HAP-1 (cell line): ENCODE measurements at regions of chr14 and their contacts with region 1.

Region 1: GRCh38 chr14:69580009-69580577 is 5.4 kb upstream of the CCDC177 start:
- DNase-seq: peak; percentile 44 to 66
- H3K4me3 ChIP-seq: no peak overlapping the region
- H3K4me1 ChIP-seq: no peaks in the 10 kb centered on the region
- H3K27me3 ChIP-seq: peaks cover 12% of the 10 kb centered on the region

Region 2: GRCh38 chr14:69726761-69727511 is 146.8 kb after region 1 on chr14:
- in situ Hi-C with region 1: loop called (anchors 5 kb)
- DNase-seq: peak; percentile 47 to 89
- H3K4me3 ChIP-seq: no peak overlapping the region
- H3K4me1 ChIP-seq: peaks cover 5% of the 10 kb centered on the region; the same call in 1 of the 2 replicates
- H3K27me3 ChIP-seq: no peaks in the 10 kb centered on the region

Region 3: GRCh38 chr14:70013269-70013873 is 433.3 kb after region 1 on chr14:
- in situ Hi-C with region 1: loop called (anchors 25 kb)
- DNase-seq: peak in 1 of 2 experiments; percentile 68
- H3K4me3 ChIP-seq: no peak overlapping the region
- H3K4me1 ChIP-seq: no peaks in the 10 kb centered on the region
- H3K27me3 ChIP-seq: peaks cover 3% of the 10 kb centered on the region; the same call in 1 of the 2 replicates

Region 4: DNA sequence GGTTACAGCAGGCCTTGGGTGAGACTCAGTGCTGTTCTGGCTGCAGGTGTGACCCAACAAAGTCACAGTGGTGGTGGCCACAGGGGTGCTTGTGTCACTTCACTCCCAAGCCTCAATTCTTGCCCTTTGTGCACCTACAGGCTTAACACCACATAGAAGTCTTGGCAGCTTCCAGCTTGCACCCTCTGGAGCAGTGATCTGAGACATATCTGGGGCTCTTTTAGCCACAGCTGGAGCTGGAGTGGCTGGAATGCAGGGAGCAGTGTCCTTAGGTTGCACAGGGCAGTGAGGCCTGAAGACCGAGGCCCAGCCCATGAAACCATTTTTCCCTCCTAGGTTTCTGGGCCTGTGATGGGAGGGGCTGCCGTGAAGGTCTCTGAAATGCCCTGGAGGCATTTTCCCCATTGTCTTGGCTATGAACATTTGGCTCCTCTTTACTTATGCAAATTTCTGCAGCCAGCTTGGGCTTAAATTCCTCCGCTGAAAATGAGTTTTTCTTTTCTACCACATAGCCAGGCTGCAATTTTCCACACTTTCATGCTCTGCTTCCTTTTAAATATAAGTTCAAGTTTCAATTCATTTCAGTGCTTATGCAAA is 909.6 kb after region 1 on chr14:
- in situ Hi-C with region 1: no loop called
- DNase-seq: peak in 1 of 2 experiments; percentile 51
- H3K4me3 ChIP-seq: no peak overlapping the region
- H3K4me1 ChIP-seq: no peaks in the 10 kb centered on the region
- H3K27me3 ChIP-seq: no peaks in the 10 kb centered on the region